ENCODE measurements at regions of chr4 and their contacts with region 1.

Region 1: GRCh38 chr4:179624768-179625181 is 2182.5 kb upstream of the AGA start:
- DNase-seq: peak; percentile 19
- H3K4me3 Mint-ChIP-seq: no peak overlapping the region
- H3K27ac Mint-ChIP-seq: no peak overlapping the region
- H3K4me1 Mint-ChIP-seq: no peaks in the 10 kb centered on the region
- H3K27me3 Mint-ChIP-seq: no peaks in the 10 kb centered on the region
- CTCF ChIP-seq: no peak

Region 2: DNA sequence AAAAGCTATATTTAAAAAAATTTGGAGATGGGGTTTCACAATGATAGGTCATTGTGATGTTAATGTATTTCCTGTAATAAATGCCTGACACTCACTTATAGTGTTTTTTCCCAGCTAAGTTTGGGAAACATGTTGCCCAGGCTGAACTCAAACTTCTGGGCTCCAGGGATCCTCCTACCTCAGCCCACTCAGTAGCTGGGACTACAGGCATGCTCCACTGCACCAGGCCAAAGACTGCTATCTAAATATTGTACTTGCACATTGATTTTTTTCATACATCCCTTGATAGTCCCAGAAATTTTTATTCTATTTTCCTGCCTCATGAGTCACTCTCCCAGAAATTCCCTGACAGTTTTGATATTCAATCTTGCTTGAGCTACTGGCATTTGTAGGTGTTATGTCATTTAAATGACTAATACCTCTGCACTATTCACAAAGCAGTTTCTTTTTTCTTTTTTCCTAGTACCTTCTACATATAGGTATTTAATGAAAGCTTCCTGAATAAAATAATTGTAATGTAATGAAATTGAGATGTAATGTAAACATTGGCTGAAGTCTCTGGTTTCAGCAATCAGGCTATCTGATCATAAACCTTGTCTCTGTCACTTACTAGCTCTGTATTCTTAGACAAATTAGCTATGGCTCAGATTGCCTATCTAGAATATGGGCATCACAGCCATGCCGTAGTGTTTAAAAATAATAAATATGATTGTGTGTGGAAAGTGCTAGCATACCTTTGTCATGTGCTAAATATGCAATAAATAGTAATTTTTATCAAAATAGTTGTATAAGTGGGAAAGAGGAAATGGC is 209.5 kb before region 1 on chr4:
- CTCF ChIA-PET with region 1: no interaction called
- intact Hi-C with region 1: loop called (anchors 10 kb)
- DNase-seq: peak; percentile 1
- H3K4me3 Mint-ChIP-seq: no peak overlapping the region
- H3K27ac Mint-ChIP-seq: peak overlapping the region; percentile 67
- H3K4me1 Mint-ChIP-seq: peaks cover 10% of the 10 kb centered on the region
- H3K27me3 Mint-ChIP-seq: no peaks in the 10 kb centered on the region
- CTCF ChIP-seq: no peak

Measured in Calu3 (cell line).